ENCODE measurements at regions of chr15 and their contacts with region 1.

Region 1: GRCh38 chr15:85858586-85859375 is 64.1 kb upstream of the KLHL25 start:
- DNase-seq: peak; percentile 48
- H3K4me3 ChIP-seq: no peak overlapping the region
- H3K27ac ChIP-seq: no peak overlapping the region
- H3K4me1 ChIP-seq: peaks cover 3% of the 10 kb centered on the region
- H3K27me3 ChIP-seq: no peaks in the 10 kb centered on the region
- CTCF ChIP-seq: peak; percentile 65 to 81

Region 2: GRCh38 chr15:85785887-85786780 is 72.6 kb before region 1 on chr15:
- CTCF ChIA-PET with region 1: no interaction called
- dilution Hi-C with region 1: no loop called
- in situ Hi-C with region 1: no loop called
- intact Hi-C with region 1: no loop called
- DNase-seq: peak; percentile 71
- H3K4me3 ChIP-seq: no peak overlapping the region
- H3K27ac ChIP-seq: peak overlapping the region; percentile 48
- H3K4me1 ChIP-seq: peaks cover 32% of the 10 kb centered on the region
- H3K27me3 ChIP-seq: no peaks in the 10 kb centered on the region
- CTCF ChIP-seq: no peak

Region 3: GRCh38 chr15:86213420-86214287 is 354.9 kb after region 1 on chr15:
- CTCF ChIA-PET with region 1: no interaction called
- dilution Hi-C with region 1: no loop called
- in situ Hi-C with region 1: loop called in 1 of 2 experiments (anchors 25 kb)
- intact Hi-C with region 1: no loop called
- DNase-seq: no peak
- H3K4me3 ChIP-seq: no peak overlapping the region
- H3K27ac ChIP-seq: no peak overlapping the region
- H3K4me1 ChIP-seq: no peaks in the 10 kb centered on the region
- H3K27me3 ChIP-seq: no peaks in the 10 kb centered on the region
- CTCF ChIP-seq: peak; percentile 11 to 42

Region 4: DNA sequence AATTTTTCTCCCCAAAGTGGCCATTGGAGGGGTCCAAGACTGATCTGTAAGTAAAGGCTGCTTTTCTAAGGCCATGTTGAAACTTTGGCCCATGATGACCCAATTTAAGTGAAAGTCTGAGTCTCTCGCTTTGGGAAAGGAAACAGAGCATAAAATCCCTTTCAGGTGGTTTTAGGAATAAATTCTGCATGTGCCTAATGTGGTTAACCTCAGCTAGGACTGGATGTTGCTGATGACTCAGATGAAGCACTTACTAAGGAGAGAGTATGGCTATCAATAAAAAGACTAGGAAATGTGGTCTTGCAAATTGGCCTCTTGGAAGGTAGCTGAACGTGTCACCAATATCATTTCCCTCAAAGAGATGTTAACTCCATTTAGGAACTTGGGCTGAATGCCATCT is 679.4 kb after region 1 on chr15:
- CTCF ChIA-PET with region 1: no interaction called
- dilution Hi-C with region 1: no loop called
- in situ Hi-C with region 1: no loop called
- intact Hi-C with region 1: no loop called
- DNase-seq: peak; percentile 69
- H3K4me3 ChIP-seq: no peak overlapping the region
- H3K27ac ChIP-seq: no peak overlapping the region
- H3K4me1 ChIP-seq: no peaks in the 10 kb centered on the region
- H3K27me3 ChIP-seq: no peaks in the 10 kb centered on the region
- CTCF ChIP-seq: no peak

Region 5: DNA sequence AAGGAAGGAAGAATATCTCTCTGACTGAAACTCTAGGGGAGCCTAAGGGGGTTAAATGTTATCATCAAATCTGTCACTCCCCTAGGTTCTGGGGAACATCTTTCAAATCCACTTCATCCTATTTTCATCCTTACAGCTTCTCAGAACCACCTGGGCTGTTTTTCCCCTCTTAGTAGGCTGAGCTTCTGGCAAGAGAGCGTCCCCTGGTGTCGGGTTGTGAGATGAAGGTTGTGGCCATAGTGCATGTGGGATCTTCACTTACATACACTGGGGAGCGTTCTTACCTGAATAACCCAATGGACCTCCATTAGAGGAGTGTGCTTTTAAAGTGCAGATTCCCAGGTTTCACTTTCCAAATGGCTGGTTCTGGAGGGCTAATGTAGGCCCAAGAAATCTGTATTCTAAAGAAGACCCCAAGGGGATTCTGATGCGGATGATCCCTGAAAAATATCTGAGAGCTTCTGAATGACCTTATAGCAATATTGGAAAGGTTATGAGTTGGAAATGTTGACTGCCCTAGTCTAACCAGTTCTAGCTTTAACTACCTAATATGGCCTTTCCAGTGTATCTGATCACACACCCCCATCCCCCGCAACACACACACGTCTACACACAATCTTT is 884.6 kb after region 1 on chr15:
- CTCF ChIA-PET with region 1: no interaction called
- dilution Hi-C with region 1: no loop called
- in situ Hi-C with region 1: loop called in 1 of 2 experiments (anchors 10 kb)
- intact Hi-C with region 1: loop called (anchors 5 kb)
- DNase-seq: peak; percentile 43
- H3K4me3 ChIP-seq: no peak overlapping the region
- H3K27ac ChIP-seq: no peak overlapping the region
- H3K4me1 ChIP-seq: no peaks in the 10 kb centered on the region
- H3K27me3 ChIP-seq: no peaks in the 10 kb centered on the region
- CTCF ChIP-seq: peak; percentile 92 to 98

Region 6: DNA sequence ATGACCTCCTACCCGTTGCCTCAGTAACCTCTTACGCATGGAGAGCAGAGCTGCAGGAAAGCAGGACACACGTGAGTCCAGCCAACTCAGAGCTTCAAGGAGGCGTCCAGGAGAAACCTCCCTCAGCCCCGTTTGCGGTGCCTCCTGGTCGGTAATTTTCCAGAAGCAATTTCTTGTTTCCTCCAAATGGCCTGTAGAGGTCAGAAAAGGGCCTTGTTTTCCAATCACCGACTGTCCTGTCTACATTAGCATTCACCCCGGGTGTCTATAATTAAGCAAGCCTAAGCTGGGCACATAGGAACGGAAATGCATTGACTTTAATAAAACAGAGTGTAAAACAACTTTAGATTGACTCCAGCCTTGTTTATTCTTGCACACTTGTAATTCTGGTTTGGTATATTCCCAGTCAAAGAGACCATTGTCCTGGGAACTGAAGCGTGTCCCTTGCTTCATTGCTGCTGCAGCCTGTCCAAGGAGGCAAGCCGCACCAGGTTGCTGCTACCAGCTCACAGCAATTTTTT is 1057.1 kb after region 1 on chr15:
- CTCF ChIA-PET with region 1: no interaction called
- dilution Hi-C with region 1: no loop called
- in situ Hi-C with region 1: loop called in 1 of 2 experiments (anchors 25 kb)
- intact Hi-C with region 1: no loop called
- DNase-seq: peak; percentile 65
- H3K4me3 ChIP-seq: no peak overlapping the region
- H3K27ac ChIP-seq: no peak overlapping the region
- H3K4me1 ChIP-seq: peaks cover 9% of the 10 kb centered on the region
- H3K27me3 ChIP-seq: no peaks in the 10 kb centered on the region
- CTCF ChIP-seq: peak; percentile 43 to 67

Region 7: GRCh38 chr15:87033056-87033455 is 1174.3 kb after region 1 on chr15:
- CTCF ChIA-PET with region 1: no interaction called
- dilution Hi-C with region 1: no loop called
- in situ Hi-C with region 1: loop called in 1 of 2 experiments (anchors 25 kb)
- intact Hi-C with region 1: no loop called
- DNase-seq: no peak
- H3K4me3 ChIP-seq: no peak overlapping the region
- H3K27ac ChIP-seq: no peak overlapping the region
- H3K4me1 ChIP-seq: peaks cover 19% of the 10 kb centered on the region
- H3K27me3 ChIP-seq: no peaks in the 10 kb centered on the region
- CTCF ChIP-seq: peak in 1 of 2 donors; percentile 31